Activated naive CD4-positive, alpha-beta T cell treated with anti-CD3 and anti-CD28 coated beads for 36 hours (primary cell): ENCODE measurements at regions of chr18 and their contacts with region 1.

Region 1: GRCh38 chr18:23619388-23619881 is 33.1 kb upstream of the NPC1 start:
- DNase-seq: peak; percentile 9
- H3K4me3 Mint-ChIP-seq: peak overlapping the region; percentile 50
- H3K27ac Mint-ChIP-seq: no peak overlapping the region
- H3K4me1 Mint-ChIP-seq: no peaks in the 10 kb centered on the region
- H3K27me3 Mint-ChIP-seq: peaks cover 36% of the 10 kb centered on the region

Region 2: DNA sequence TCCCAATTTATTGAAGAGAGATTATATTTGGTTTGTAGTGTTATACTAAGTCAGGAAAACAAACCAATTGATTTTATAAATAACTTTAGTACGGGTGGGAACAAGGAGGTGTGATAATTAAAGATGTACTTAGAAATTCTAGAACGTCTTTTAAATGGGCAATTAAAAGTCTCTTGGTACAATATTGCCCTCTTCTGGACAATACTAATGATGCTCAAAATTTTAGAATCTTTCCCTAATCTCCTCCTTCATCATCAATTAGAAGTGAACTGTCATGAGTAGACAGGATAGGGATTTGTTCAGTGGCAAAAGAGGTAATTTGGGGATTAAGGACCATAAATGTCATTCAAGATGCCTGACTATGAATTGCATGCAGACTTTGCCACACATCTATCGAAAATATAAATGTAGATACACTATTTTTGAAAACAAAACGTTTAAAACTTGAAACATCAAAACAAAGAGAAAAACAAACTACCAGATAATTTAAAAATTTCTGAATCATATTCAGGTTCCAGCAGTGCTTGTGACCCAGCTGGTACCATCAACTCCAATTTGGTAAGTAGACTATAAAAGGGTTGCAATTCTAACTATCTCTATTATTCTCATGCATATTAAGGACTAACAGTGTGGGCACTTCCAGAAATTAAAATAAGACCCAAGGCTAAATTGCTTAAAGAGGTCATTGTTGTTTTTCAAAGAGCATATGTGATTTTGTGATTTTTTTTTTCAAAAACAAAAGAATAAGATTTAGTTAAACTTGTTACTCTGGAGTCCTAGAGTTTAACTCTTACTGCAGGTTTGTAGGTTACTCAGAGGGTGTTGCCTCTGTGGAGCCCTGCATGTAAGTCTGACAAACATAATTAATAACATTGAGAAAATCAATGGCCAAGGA is 193.4 kb after region 1 on chr18:
- CTCF ChIA-PET with region 1: interaction called, 6 read pairs
- intact Hi-C with region 1: loop called (anchors 1 kb)
- DNase-seq: no peak
- H3K4me3 Mint-ChIP-seq: no peak overlapping the region
- H3K27ac Mint-ChIP-seq: no peak overlapping the region
- H3K4me1 Mint-ChIP-seq: peaks cover 21% of the 10 kb centered on the region
- H3K27me3 Mint-ChIP-seq: no peaks in the 10 kb centered on the region